SK-N-SH (cell line): ENCODE measurements at regions of chr1 and their contacts with region 1.

Region 1: GRCh38 chr1:46527474-46528296 is 23.8 kb downstream of the KNCN start:
- DNase-seq: peak; percentile 90
- H3K4me3 ChIP-seq: no peak overlapping the region; a peak in 1 of 4 replicates
- H3K27ac ChIP-seq: no peak overlapping the region
- H3K4me1 ChIP-seq: peaks cover 0 to 4% of the 10 kb centered on the region in 2 experiments; a peak in 1 of 4 replicates
- H3K27me3 ChIP-seq: no peaks in the 10 kb centered on the region; the same call in 1 of the 2 replicates
- CTCF ChIP-seq: peak; percentile 93
- EP300 ChIP-seq: no peak
- RAD21 ChIP-seq: peak; percentile 98

Region 2: DNA sequence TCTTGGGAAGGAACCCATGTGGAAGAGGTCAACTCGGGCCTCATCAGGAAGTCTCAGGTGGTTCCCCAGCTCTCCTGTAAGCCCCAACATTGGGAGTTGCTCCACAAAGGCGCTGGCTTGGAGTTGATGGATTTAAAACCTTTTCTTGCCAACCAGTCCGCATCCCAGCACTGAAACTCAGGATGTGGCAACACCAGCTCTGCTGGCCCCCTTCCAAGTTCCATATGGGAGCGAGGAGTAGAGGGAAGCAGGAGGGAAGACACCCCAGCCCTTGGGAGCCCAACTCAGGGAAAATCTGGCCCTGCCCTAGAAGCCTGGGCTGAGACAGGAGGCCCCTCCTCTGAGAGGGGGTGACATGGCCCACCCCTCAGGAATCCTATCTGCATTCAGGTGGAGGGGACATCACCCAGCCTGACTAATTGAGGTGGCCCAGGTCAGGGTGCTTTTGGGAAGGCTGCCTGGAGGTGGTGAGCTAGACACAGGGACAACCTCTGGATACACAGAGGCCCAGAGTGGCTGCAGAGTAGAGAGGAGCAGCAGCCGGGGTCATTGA is 71.2 kb before region 1 on chr1:
- CTCF ChIA-PET with region 1: interaction called, 496 read pairs
- POLR2A ChIA-PET with region 1: no interaction called
- DNase-seq: no peak
- H3K4me3 ChIP-seq: no peak overlapping the region
- H3K27ac ChIP-seq: no peak overlapping the region
- H3K4me1 ChIP-seq: no peaks in the 10 kb centered on the region; a peak in 1 of 4 replicates
- H3K27me3 ChIP-seq: no peaks in the 10 kb centered on the region
- CTCF ChIP-seq: no peak
- EP300 ChIP-seq: no peak
- RAD21 ChIP-seq: no peak

Region 3: GRCh38 chr1:46489638-46490405 is 37.9 kb before region 1 on chr1 and contains the start of gene DMBX1:
- CTCF ChIA-PET with region 1: interaction called, 17 read pairs
- POLR2A ChIA-PET with region 1: no interaction called
- DNase-seq: peak; percentile 86
- H3K4me3 ChIP-seq: peak within 1 kb of the TSS; percentile 31 to 47; a peak in 3 of 4 replicates
- H3K27ac ChIP-seq: no peak within 1 kb of the TSS
- H3K4me1 ChIP-seq: peaks cover 0 to 5% of the 10 kb centered on the region in 2 experiments; a peak in 1 of 4 replicates
- H3K27me3 ChIP-seq: peaks cover 59% of the 10 kb centered on the region
- CTCF ChIP-seq: no peak
- EP300 ChIP-seq: no peak
- RAD21 ChIP-seq: no peak
- polyA plus RNA-seq, gene DMBX1: not detected in 2 replicates

Region 4: GRCh38 chr1:46547481-46548383 is 20.0 kb after region 1 on chr1:
- CTCF ChIA-PET with region 1: interaction called, 53 read pairs
- POLR2A ChIA-PET with region 1: no interaction called
- DNase-seq: peak; percentile 64
- H3K4me3 ChIP-seq: no peak overlapping the region
- H3K27ac ChIP-seq: no peak overlapping the region
- H3K4me1 ChIP-seq: peaks cover 0 to 9% of the 10 kb centered on the region in 2 experiments; a peak in 1 of 4 replicates
- H3K27me3 ChIP-seq: peaks cover 18% of the 10 kb centered on the region; the same call in 1 of the 2 replicates
- CTCF ChIP-seq: peak; percentile 70
- EP300 ChIP-seq: no peak
- RAD21 ChIP-seq: peak; percentile 61